ENCODE measurements at regions of chr7 and their contacts with region 1.

Region 1: DNA sequence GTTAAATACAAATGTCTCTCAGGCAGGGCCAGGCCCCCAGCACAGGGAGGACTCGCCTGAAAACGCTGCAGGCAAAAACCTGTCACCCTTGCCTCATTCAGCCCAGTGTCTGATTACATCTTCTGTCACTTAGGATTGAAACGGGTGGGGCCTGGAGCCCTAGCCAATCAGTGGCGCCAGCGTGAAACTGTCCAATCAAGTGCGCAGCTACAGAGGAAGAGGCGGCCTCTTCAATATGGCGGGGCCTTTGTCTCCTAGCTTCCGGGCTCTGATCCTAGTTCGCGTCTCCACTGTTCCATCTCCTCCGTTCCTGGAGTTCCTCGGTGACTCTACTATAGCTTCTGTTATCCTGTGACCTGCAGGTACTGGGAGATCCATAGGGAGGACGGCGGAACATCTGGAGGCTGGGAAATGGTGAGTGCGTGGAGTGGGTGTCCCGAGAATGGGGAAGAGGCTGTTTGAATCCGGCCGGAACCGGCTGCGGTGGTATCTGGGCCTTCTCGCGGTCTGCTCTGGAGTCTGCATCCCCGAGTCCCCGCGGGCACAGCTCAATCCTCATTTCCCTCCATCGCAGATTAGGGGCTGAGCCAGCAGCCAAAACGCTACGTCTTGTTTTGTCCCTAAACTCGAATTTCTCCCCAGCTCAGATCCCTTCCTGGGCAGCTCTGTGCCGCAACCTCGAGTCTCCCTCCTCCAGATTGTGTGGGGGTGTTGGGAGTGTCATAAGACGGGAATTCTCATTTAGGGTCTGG is at the start of gene ZNF736:
- DNase-seq: peak; percentile 98
- H3K4me3 ChIP-seq: peak within 1 kb of the TSS; percentile 68 to 83 (median 78)
- H3K27ac ChIP-seq: peak within 1 kb of the TSS; percentile 67 to 75 (median 72)
- H3K4me1 ChIP-seq: peaks cover 17 to 27% (median 24%) of the 10 kb centered on the region in 4 donors
- H3K27me3 ChIP-seq: no peaks in the 10 kb centered on the region
- CTCF ChIP-seq: no peak
- EP300 ChIP-seq: no peak
- POLR2A ChIP-seq: no peak
- total RNA-seq, gene ZNF736: 4.1 to 10.0 (median 4.7) TPM

Region 2: GRCh38 chr7:63953181-63953580 is 360.7 kb before region 1 on chr7:
- intact Hi-C with region 1: no loop called
- DNase-seq: no peak
- H3K4me3 ChIP-seq: no peak overlapping the region
- H3K27ac ChIP-seq: no peak overlapping the region
- H3K4me1 ChIP-seq: no peaks in the 10 kb centered on the region
- H3K27me3 ChIP-seq: no peaks in the 10 kb centered on the region
- CTCF ChIP-seq: no peak
- EP300 ChIP-seq: no peak
- POLR2A ChIP-seq: no peak

Region 3: GRCh38 chr7:64206903-64207302 is 107.0 kb before region 1 on chr7 and contains the start of gene ZNF735:
- intact Hi-C with region 1: no loop called
- DNase-seq: no peak
- H3K4me3 ChIP-seq: no peak within 1 kb of the TSS
- H3K27ac ChIP-seq: no peak within 1 kb of the TSS
- H3K4me1 ChIP-seq: no peaks in the 10 kb centered on the region
- H3K27me3 ChIP-seq: no peaks in the 10 kb centered on the region
- CTCF ChIP-seq: no peak
- EP300 ChIP-seq: no peak
- POLR2A ChIP-seq: no peak
- total RNA-seq, gene ZNF735: not detected

Region 4: DNA sequence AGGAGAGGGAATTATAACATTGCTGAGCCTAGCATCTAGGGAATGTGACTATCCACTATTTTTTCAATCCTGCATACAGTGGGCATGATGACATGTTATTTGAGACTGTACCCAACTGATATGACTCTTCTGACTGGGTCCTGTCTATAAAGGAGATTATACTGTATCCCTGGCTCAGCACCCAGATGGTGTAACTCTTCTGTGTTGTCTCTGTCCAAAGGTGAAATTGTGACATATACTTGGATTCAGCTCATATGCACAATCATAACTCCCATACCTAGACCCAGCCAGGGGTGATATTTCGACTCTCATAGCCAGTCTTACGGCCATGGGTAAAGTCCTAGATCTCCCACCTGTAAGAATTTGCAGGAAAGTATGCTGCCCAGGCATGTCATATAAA is 59.1 kb after region 1 on chr7:
- intact Hi-C with region 1: no loop called
- DNase-seq: no peak
- H3K4me3 ChIP-seq: no peak overlapping the region
- H3K27ac ChIP-seq: no peak overlapping the region
- H3K4me1 ChIP-seq: no peaks in the 10 kb centered on the region
- H3K27me3 ChIP-seq: no peaks in the 10 kb centered on the region
- CTCF ChIP-seq: no peak
- EP300 ChIP-seq: no peak
- POLR2A ChIP-seq: no peak

Region 5: GRCh38 chr7:64504581-64505120 is 190.7 kb after region 1 on chr7:
- intact Hi-C with region 1: no loop called
- DNase-seq: no peak
- H3K4me3 ChIP-seq: no peak overlapping the region
- H3K27ac ChIP-seq: no peak overlapping the region
- H3K4me1 ChIP-seq: no peaks in the 10 kb centered on the region
- H3K27me3 ChIP-seq: no peaks in the 10 kb centered on the region
- CTCF ChIP-seq: no peak
- EP300 ChIP-seq: no peak
- POLR2A ChIP-seq: no peak

Region 6: GRCh38 chr7:64562626-64563275 is 248.8 kb after region 1 on chr7 and contains the start of gene ZNF680:
- intact Hi-C with region 1: loop called (anchors 10 kb)
- DNase-seq: peak; percentile 98
- H3K4me3 ChIP-seq: peak within 1 kb of the TSS; percentile 76 to 87 (median 81)
- H3K27ac ChIP-seq: peak within 1 kb of the TSS; percentile 80 to 93 (median 86)
- H3K4me1 ChIP-seq: peaks cover 26 to 51% (median 47%) of the 10 kb centered on the region in 4 donors
- H3K27me3 ChIP-seq: no peaks in the 10 kb centered on the region
- CTCF ChIP-seq: peak in 1 of 3 experiments; percentile 12
- EP300 ChIP-seq: no peak
- POLR2A ChIP-seq: peak; percentile 14
- total RNA-seq, gene ZNF680: 6.1 to 16.2 (median 10.1) TPM

Measured in esophagus muscularis mucosa (tissue), 4 donors.